Dorsolateral prefrontal cortex (tissue), 120 donors: ENCODE measurements at regions of chrX and their contacts with region 1.

Region 1: DNA sequence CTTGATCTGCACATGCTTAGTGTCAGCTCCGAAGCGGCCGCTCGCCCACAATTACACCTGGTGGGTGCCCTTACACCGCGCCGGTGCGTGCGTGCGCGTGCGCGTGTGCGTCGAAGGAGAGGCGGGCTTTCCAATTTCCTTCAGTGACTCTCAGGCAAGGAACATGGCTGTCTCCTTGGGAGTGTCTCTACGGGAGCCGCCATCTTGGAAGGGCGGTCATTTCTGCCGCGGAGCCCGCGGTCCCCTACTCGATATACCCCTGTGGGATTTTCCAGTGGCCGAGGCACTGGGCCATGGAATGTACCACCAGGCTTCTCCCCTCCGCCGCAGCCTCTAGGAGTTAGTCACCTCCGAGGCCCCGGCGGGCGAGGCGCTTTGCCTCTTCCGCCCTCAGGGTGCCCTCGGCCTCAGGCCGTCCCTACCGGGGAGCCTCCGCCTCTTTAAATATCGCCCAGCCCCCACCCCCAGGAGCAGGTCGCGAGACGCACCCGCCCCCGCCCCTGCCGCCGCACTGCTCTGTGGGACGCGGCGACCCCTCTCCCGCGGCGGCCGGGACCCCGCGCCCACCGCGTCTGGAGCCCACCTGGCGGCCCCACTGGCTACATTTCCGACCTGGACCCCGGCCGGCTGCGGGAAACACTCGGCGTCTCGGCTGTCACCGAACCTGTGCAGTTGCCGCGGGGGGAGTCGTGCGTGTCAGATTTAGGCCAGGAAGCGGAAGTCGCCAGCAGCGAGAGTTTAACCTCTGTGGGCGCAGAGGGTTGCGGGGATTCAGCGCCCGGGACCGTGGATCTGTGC is at the start of gene ZNF41:
- DNase-seq: peak; percentile 41 to 76 (median 72)
- H3K4me3 ChIP-seq: peak within 1 kb of the TSS; percentile 43 to 84 (median 69)
- H3K27ac ChIP-seq: peak within 1 kb of the TSS; percentile 35 to 95 (median 90)
- H3K27me3 ChIP-seq: peaks cover 0 to 17% (median 0%) of the 10 kb centered on the region in 45 donors
- CTCF ChIP-seq: peak in 1 of 56 donors; percentile 6
- total RNA-seq, gene ZNF41: 9.2 to 19.2 (median 13.6) TPM

Region 2: DNA sequence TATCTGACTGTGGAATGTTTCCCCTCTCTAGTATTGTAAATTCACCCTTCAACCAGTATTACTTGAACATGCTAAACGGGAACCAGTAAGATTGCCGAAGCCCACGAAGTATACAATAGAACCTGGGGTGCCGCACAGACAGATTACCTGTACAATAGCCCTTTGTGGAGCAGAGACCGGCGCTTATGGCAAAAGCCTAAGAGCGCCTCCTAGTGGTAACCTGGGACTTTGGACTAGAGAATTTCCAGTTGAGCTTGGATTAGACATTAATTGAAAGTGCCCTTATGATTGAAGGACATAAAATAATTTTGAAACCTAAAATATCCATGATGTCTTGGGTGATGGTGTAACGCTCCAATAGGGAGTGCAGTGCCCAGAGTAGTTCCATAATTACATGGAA is 98.2 kb before region 1 on chrX:
- intact Hi-C with region 1: loop called in 1 of 2 experiments (anchors 10 kb)
- DNase-seq: peak in 9 of 10 donors; percentile 28 to 66 (median 52)
- H3K4me3 ChIP-seq: peak overlapping the region in 4 of 59 donors; percentile 14 to 39 (median 22)
- H3K27ac ChIP-seq: no peak overlapping the region
- H3K27me3 ChIP-seq: peaks cover 0 to 53% (median 4%) of the 10 kb centered on the region in 45 donors
- CTCF ChIP-seq: peak; percentile 42 to 86 (median 74)

Region 3: GRCh38 chrX:47523297-47523696 is 40.6 kb after region 1 on chrX:
- intact Hi-C with region 1: no loop called
- DNase-seq: peak; percentile 68 to 89 (median 78)
- H3K4me3 ChIP-seq: peak overlapping the region; percentile 15 to 70 (median 55)
- H3K27ac ChIP-seq: peak overlapping the region in 37 of 59 donors; percentile 14 to 81 (median 57)
- H3K27me3 ChIP-seq: peaks cover 0 to 46% (median 1%) of the 10 kb centered on the region in 45 donors
- CTCF ChIP-seq: peak; percentile 40 to 93 (median 81)

Region 4: GRCh38 chrX:47776292-47777006 is 293.7 kb after region 1 on chrX:
- intact Hi-C with region 1: no loop called
- DNase-seq: no peak
- H3K4me3 ChIP-seq: no peak overlapping the region
- H3K27ac ChIP-seq: no peak overlapping the region
- H3K27me3 ChIP-seq: peaks cover 0 to 44% (median 3%) of the 10 kb centered on the region in 45 donors
- CTCF ChIP-seq: no peak